ENCODE measurements at regions of chr5 and their contacts with region 1.

Region 1: GRCh38 chr5:170038241-170038640 is 57.9 kb upstream of the INSYN2B start:
- DNase-seq: no peak
- H3K4me3 ChIP-seq: no peak overlapping the region
- H3K27ac ChIP-seq: no peak overlapping the region
- H3K4me1 ChIP-seq: no peaks in the 10 kb centered on the region
- H3K27me3 ChIP-seq: no peaks in the 10 kb centered on the region
- CTCF ChIP-seq: no peak
- EP300 ChIP-seq: no peak
- POLR2A ChIP-seq: no peak

Region 2: DNA sequence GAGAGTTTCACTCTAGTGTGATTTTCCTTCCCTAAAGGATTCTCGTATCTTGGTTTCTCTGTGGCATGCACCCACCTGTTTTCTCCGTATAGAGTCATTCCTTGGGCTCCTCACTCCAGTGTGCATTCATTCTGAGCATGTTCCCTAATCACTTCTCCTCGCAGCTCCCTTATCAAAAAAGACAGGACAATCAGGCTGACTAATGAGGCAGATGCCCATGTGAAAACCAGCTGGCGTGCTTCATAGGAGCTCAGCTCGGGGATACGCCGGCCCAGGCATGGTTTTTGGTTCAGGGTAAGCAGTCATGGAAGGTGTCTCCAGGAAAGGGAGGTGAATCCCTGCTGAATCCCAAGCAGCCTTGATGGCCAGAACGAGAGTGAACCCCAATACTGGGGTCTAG is 16.7 kb before region 1 on chr5:
- in situ Hi-C with region 1: no loop called
- intact Hi-C with region 1: no loop called
- DNase-seq: no peak
- H3K4me3 ChIP-seq: no peak overlapping the region
- H3K27ac ChIP-seq: no peak overlapping the region
- H3K4me1 ChIP-seq: no peaks in the 10 kb centered on the region
- H3K27me3 ChIP-seq: no peaks in the 10 kb centered on the region
- CTCF ChIP-seq: no peak
- EP300 ChIP-seq: no peak
- POLR2A ChIP-seq: no peak

Region 3: DNA sequence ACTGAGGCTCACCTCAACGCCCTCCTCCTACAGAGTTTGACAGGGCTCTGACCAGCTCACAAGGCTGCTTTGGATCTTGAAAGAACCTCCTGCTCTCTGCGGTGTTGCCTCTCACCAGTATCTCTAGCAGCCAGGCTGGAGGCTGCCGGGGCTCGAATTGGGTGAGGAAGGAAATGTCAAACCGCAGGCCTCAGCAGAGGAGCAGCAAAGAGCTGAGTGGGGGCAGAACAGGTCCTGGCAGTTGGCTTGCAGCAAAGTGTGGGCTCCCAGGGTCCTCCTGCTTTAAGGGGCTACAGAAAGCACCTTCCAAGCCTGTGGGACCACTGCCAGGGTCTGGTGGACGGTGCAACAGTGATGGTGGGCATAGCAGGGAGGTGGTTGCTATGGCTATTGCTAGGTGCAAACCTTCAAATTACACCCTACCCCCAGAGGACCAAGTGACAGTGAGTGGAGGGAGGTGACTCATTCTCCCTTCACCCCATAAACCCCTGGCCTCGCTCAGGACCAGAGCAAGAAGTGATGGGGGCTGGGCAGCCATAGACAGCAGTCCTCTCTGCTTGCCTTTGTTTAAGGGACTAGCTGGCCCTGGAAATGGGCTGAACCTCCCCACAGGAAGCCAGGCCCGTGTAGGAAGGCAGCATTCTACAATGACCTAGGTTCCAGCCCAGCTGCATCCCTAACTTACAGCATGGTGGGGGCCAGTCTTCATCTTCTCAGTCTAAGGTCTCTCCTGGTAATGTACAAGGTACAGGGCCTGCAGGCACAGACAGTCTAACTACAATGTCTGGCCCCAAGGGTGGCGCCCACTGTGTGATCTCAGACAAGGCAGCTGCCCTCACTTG is 240.6 kb after region 1 on chr5:
- in situ Hi-C with region 1: no loop called
- intact Hi-C with region 1: no loop called
- DNase-seq: peak; percentile 70
- H3K4me3 ChIP-seq: no peak overlapping the region
- H3K27ac ChIP-seq: peak overlapping the region; percentile 45 to 70 (median 54)
- H3K4me1 ChIP-seq: peaks cover 3 to 40% (median 16%) of the 10 kb centered on the region in 4 donors
- H3K27me3 ChIP-seq: no peaks in the 10 kb centered on the region
- CTCF ChIP-seq: no peak
- EP300 ChIP-seq: no peak
- POLR2A ChIP-seq: no peak

Region 4: GRCh38 chr5:171149333-171149732 is 1111.1 kb after region 1 on chr5:
- in situ Hi-C with region 1: no loop called
- intact Hi-C with region 1: loop called (anchors 5 kb)
- DNase-seq: no peak
- H3K4me3 ChIP-seq: no peak overlapping the region
- H3K27ac ChIP-seq: no peak overlapping the region
- H3K4me1 ChIP-seq: no peaks in the 10 kb centered on the region
- H3K27me3 ChIP-seq: no peaks in the 10 kb centered on the region
- CTCF ChIP-seq: no peak
- EP300 ChIP-seq: no peak
- POLR2A ChIP-seq: no peak